ENCODE measurements at regions of chr5 and their contacts with region 1.

Region 1: GRCh38 chr5:178075840-178076548 is 37.3 kb upstream of the N4BP3 start:
- DNase-seq: peak; percentile 84
- H3K4me3 ChIP-seq: peak overlapping the region in 1 of 2 experiments; percentile 35; a peak in 1 of 4 replicates
- H3K27ac ChIP-seq: no peak overlapping the region
- H3K4me1 ChIP-seq: peaks cover 0 to 7% of the 10 kb centered on the region in 2 experiments; a peak in 1 of 4 replicates
- H3K27me3 ChIP-seq: peaks cover 7% of the 10 kb centered on the region; the same call in 1 of the 2 replicates
- CTCF ChIP-seq: peak; percentile 90
- EP300 ChIP-seq: no peak
- RAD21 ChIP-seq: peak; percentile 81

Region 2: DNA sequence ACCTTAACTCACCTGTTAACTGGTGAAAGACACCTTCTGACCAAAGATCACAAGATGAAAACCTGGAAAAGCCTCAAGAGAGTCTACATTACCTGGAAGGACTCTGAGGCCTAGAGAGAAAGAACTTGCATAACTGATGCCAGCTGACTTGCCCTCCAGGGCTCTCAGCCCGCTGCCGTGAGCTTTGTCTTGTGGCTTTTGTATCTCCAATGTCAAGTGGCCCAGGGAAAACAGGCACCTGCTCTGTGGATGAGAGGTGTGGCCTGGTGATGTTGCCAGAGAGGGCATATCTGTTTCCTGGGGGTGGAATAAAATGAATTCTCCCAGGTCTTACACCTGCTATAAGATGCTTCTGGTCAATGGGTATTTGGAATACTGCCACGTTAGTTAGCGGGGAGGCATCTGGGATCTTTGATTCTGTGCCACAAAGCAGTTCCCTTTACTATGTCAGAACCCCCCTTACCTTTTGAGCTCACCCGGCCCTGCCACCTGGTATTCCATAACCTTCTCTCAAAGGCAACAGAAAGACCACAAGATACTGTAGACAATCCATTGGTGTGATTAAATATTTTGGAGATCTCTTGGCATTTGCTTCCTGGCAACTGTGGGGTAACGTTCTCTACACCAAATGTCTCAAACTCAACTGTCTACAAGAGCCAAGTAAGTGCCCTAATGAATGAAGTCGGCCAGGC is 17.5 kb before region 1 on chr5:
- CTCF ChIA-PET with region 1: interaction called, 32 read pairs
- POLR2A ChIA-PET with region 1: no interaction called
- DNase-seq: no peak
- H3K4me3 ChIP-seq: no peak overlapping the region
- H3K27ac ChIP-seq: no peak overlapping the region
- H3K4me1 ChIP-seq: no peaks in the 10 kb centered on the region
- H3K27me3 ChIP-seq: peaks cover 9% of the 10 kb centered on the region; the same call in 1 of the 2 replicates
- CTCF ChIP-seq: no peak
- EP300 ChIP-seq: no peak
- RAD21 ChIP-seq: no peak

Region 3: DNA sequence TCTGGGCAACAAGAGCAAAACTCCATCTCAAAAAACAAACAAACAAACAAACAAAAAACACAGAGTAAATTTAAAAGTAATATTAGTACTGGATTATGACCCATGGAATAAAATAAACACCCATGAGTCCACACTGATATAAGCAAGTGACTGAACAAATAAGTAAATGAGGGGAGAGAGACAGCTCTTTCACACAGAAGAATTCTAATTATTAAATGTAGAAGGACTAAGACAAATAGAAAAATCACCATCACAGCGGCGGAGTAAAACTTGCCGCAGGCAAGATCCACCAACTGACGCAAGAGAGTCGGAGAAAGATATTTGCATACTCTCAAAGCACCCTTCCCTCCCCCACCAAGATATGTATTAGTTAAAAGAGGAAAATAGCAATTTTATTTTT is 22.6 kb after region 1 on chr5:
- CTCF ChIA-PET with region 1: interaction called, 27 read pairs
- POLR2A ChIA-PET with region 1: no interaction called
- DNase-seq: no peak
- H3K4me3 ChIP-seq: no peak overlapping the region
- H3K27ac ChIP-seq: no peak overlapping the region
- H3K4me1 ChIP-seq: no peaks in the 10 kb centered on the region
- H3K27me3 ChIP-seq: no peaks in the 10 kb centered on the region
- CTCF ChIP-seq: no peak
- EP300 ChIP-seq: no peak
- RAD21 ChIP-seq: no peak

Region 4: DNA sequence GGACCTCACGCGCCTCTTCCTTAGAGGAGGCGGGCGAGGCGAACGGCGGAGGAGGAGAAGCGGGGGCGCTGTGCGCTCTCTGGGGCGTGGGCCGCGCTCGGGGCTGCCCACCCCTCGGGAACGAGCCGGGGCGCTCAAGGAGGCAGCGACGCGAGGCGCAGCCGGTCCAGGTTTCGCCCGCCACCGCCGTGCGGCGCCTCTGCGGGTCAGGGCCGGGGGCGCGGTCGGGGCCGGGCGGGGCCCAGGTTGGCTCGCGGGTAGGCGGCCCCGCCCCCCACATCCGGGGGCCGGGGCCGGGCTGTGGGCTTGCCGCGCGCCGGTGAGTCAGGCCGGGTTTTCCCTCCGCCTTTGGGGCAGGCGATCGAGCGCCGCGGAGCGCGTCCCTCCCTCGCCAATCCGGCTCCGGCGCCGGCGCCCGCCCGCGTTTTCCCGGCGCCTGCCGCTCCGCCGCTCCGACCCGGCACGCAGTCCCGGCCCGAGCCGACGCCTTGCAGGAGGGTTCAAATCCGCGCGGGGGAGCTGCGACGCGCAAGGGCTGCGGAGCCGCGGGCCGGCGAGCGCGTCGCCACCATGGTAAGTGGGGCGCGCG is 37.3 kb after region 1 on chr5 and contains the start of gene N4BP3:
- CTCF ChIA-PET with region 1: interaction called, 116 read pairs
- POLR2A ChIA-PET with region 1: no interaction called
- DNase-seq: peak; percentile 91
- H3K4me3 ChIP-seq: peak within 1 kb of the TSS; percentile 44 to 52
- H3K27ac ChIP-seq: no peak within 1 kb of the TSS
- H3K4me1 ChIP-seq: peaks cover 0 to 25% of the 10 kb centered on the region in 2 experiments; a peak in 1 of 4 replicates
- H3K27me3 ChIP-seq: no peaks in the 10 kb centered on the region; the same call in 1 of the 2 replicates
- CTCF ChIP-seq: no peak
- EP300 ChIP-seq: no peak
- RAD21 ChIP-seq: no peak
- polyA plus RNA-seq, gene N4BP3: 0.16 and 0.28 TPM in 2 replicates

Region 5: DNA sequence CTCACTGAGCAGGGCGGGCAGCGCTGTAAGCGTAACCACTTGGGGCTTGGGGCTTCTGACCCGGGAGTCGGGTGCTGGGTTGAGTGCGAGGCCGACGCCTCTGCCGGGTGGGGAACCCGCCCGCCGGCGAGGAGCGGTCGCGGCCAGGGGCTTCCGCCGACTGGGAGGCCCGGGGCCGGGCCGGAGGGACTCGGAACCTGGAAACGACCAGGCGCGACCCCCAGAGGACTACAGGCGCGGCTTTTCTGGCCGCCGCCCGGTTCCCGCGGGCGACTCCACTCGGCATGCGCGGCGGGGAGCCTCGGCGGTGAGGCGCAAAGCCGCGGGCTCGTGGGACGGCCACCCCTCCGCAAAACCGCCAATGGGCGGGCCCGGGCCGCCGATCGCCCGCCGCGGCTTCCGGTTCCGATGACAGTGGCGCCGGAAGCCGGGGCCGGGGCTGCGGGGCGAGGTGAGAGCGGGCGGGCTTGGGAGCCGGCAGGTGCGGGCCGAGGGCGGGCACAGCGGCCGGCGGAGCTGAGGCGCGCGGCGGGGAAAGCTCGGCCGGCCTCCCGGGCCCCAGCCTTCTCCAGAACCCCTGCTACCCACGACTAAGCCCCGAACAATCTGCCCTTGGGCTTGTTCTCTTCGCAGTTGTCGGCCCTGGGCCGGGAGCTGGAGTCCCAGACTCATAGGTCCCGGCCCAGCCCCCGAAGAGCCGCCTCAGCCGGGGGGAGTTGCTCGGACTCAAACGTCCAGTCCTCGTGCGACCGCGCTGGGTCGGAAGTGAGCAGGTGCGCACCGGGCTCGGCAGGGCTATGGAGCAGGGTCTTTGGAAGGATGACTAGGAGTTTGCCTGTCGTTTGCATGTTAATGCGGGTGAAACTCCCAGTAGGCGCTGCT is 54.9 kb after region 1 on chr5 and contains the start of gene RMND5B:
- CTCF ChIA-PET with region 1: interaction called, 116 read pairs
- POLR2A ChIA-PET with region 1: interaction called, 3 read pairs
- DNase-seq: peak; percentile 97
- H3K4me3 ChIP-seq: peak within 1 kb of the TSS; percentile 75 to 99
- H3K27ac ChIP-seq: peak within 1 kb of the TSS; percentile 77 to 80
- H3K4me1 ChIP-seq: peaks cover 0 to 5% of the 10 kb centered on the region in 2 experiments; a peak in 1 of 4 replicates
- H3K27me3 ChIP-seq: no peaks in the 10 kb centered on the region
- CTCF ChIP-seq: no peak
- EP300 ChIP-seq: peak in 1 of 2 experiments; percentile 36; a peak in 1 of 4 replicates
- RAD21 ChIP-seq: no peak
- polyA plus RNA-seq, gene RMND5B: 42.8 and 43.7 TPM in 2 replicates

Region 6: DNA sequence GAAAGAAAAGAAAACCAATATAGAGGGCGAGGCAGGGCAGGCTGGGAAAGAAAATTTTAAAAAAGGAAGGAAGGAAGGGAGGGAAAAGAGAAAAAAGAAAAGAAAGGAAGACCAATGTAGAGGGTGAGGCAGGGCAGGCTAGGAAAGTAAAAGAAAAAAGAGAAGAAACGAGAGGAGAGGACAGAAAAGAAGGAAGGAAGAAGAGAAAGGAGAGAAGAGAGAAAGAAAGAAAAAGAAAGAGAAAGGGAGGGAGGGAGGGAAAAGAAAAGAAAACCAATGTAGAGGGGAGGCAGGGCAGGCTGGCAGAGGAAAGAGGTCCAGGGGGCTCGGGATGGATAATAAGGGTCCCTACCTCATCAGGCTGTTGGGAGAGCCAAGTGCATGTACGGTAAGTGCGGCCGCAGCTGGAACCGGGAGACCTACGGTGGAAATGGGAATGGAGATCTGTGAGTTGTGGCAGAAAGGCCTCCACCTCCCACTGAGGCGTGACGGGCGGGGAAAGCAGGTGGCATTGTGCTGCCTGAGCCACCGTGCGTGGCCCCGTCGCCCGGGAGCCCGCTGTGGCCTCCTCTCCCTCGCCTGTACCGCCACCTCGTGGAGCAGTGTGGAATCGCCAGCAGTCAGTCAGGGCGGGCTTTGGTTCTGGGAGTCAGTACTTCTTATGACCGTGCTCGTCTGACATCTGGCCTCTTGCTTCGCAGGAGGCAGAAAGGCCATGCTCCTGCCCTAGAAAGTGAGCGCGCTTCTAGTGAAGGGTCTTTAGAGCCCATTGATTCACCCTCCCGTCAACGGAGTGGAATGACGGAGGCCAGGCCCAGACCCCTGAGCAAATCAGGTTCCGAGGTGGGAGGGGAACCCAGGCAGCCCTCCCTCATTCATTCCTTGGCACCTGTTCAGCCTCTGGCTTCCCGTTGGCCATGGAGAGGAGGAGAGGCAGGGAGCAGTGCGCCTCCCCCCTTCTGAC is 88.1 kb after region 1 on chr5:
- CTCF ChIA-PET with region 1: interaction called, 319 read pairs
- POLR2A ChIA-PET with region 1: no interaction called
- DNase-seq: peak; percentile 95
- H3K4me3 ChIP-seq: peak overlapping the region; percentile 10 to 58; a peak in 3 of 4 replicates
- H3K27ac ChIP-seq: no peak overlapping the region
- H3K4me1 ChIP-seq: peaks cover 0 to 8% of the 10 kb centered on the region in 2 experiments; a peak in 1 of 4 replicates
- H3K27me3 ChIP-seq: no peaks in the 10 kb centered on the region
- CTCF ChIP-seq: peak; percentile 94
- EP300 ChIP-seq: no peak
- RAD21 ChIP-seq: peak; percentile 94

Region 7: DNA sequence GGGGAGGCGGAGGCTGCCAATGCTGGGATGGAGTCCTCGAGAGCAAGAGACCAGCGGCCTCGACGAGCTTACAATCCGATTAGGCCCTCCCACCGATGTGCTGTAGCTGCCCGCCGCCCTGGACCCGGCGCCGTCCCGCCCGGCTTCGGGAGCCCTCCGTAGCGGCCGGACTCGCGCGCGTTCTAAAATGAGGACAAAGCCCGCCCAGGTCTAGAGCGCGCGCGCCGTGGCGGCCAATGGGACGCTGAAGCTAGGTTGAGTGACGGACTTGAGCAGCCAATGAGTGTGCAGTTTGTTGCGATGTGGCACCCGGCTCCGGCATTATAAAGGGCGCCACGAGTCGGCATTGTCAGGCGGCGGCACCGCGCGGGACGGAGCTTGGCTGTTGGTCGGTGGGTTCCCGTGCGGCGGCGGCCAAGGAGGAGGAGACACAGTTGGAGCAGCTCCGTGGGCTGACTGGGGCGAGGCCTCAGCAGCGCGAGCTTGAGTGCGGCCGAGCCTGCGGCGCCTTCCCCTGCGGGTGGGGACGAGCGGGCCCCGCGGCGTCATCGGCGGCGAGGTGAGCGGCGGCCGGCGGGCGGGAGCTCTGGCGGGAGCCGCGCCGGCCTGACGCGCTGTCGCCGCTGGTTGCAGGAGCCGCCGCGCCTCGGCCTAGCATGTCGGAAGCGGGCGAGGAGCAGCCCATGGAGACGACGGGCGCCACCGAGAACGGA is 128.3 kb after region 1 on chr5 and contains the start of gene HNRNPAB:
- CTCF ChIA-PET with region 1: interaction called, 24 read pairs
- POLR2A ChIA-PET with region 1: no interaction called
- DNase-seq: peak; percentile 99
- H3K4me3 ChIP-seq: peak within 1 kb of the TSS; percentile 84 to 90
- H3K27ac ChIP-seq: peak within 1 kb of the TSS; percentile 70 to 76
- H3K4me1 ChIP-seq: peaks cover 14 to 21% of the 10 kb centered on the region in 2 experiments
- H3K27me3 ChIP-seq: no peaks in the 10 kb centered on the region
- CTCF ChIP-seq: no peak
- EP300 ChIP-seq: no peak
- RAD21 ChIP-seq: no peak
- polyA plus RNA-seq, gene HNRNPAB: 157 and 164 TPM in 2 replicates

Measured in SK-N-SH (cell line).